ENCODE measurements at regions of chr2 and their contacts with region 1.

Region 1: DNA sequence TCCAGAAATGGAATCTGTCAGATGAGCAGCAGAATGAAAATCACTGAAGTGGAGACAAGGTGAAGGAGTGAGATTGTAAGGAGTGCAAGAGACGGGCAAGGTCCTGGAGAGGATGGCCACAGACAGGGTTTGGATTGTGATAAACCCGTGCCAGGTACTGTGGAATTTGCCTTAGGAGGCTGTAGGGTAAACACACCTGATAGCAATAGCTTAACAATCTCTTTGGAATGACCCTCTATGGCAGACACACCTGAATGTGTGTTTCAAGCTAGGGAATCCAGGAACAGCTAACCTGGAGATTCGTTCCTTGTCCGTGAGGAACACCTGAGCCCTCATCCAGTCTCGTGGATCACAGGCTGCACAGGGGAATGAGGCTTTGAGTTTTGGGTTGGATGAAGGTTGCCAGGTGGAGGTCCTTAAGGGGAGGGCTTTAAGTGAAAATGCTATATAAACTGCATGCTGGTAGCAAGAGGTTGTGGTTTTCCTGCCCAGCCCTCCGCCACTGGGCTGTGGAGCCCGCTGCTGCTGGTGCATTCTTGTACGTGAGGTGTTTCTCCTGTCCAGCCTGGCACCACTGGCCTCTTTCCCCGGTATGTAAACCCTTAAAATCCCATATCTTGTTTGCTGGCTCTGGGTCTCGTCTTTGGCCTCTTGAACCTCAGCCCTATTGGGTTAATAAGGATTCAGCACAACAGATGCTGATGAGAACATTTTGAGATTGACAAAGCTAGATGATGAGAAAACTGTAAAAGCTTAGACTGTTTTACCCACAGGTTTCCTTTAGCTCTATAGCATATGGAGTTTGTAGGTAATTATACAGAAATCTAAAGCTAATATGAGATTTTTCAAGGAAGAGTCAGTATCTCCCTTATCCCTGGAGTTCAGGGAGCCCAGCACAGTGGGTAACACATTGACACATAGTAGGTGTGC is 117.9 kb downstream of the ARHGAP15 start:
- DNase-seq: peak in 19 of 35 experiments; percentile 4 to 47 (median 22)
- ATAC-seq: peak; percentile 79 to 92 (median 84)
- H3K4me3 ChIP-seq: peak overlapping the region in 1 of 2 donors; percentile 41
- H3K4me3 Mint-ChIP-seq: no peak overlapping the region
- H3K27ac ChIP-seq: peak overlapping the region; percentile 47
- H3K27ac Mint-ChIP-seq: no peak overlapping the region
- H3K4me1 ChIP-seq: peaks cover 19 to 22% of the 10 kb centered on the region in 2 experiments
- H3K4me1 Mint-ChIP-seq: peaks cover 23 to 38% (median 34%) of the 10 kb centered on the region in 3 donors
- H3K27me3 ChIP-seq: no peaks in the 10 kb centered on the region
- H3K27me3 Mint-ChIP-seq: no peaks in the 10 kb centered on the region

Region 2: GRCh38 chr2:143223556-143223955 is 23.5 kb before region 1 on chr2:
- CTCF ChIA-PET with region 1: interaction called in 1 of 2 experiments, 10 read pairs
- POLR2A ChIA-PET with region 1: no interaction called
- DNase-seq: no peak
- ATAC-seq: no peak
- H3K4me3 ChIP-seq: no peak overlapping the region
- H3K4me3 Mint-ChIP-seq: no peak overlapping the region
- H3K27ac ChIP-seq: no peak overlapping the region
- H3K27ac Mint-ChIP-seq: peak overlapping the region; percentile 77 to 82
- H3K4me1 ChIP-seq: peaks cover 2 to 9% of the 10 kb centered on the region in 2 experiments
- H3K4me1 Mint-ChIP-seq: peaks cover 48 to 65% (median 63%) of the 10 kb centered on the region in 3 donors
- H3K27me3 ChIP-seq: no peaks in the 10 kb centered on the region
- H3K27me3 Mint-ChIP-seq: no peaks in the 10 kb centered on the region

Region 3: DNA sequence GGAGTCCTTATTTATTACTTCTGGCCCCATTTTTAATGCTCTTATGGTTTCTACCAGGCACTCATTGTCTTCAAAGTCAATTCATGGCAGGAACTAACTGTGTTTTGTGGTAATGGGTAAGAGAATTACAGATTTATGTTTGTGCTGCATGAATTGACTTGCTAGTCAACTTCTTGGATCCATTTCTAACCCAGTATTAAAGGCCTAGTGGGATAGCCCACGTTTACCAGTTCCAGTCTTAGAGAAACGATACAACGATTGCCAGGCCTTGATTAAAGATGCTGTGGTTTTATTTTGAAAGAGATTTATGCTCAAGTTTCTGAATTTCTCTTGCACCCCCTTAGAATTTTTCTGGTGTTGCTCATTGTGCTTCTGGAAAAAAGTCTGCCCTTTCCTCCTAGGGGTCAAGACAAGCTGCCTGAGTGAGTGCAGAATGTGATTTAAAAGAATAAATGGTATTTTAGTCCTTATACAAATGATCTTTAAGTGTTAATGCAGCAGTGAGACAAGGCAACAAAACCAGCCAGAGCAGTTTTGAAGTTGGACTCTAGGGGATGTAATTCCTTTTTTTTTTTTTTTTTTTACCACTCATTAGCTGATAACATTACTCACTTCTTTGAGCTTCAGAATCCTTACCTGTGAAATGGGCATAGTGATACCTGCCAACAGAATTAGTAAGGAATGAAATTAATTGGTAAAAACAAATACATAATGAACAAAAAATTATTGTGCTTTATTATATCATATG is 16.4 kb before region 1 on chr2:
- CTCF ChIA-PET with region 1: interaction called, 3 to 13 read pairs
- POLR2A ChIA-PET with region 1: interaction called in 1 of 2 experiments, 3 read pairs
- DNase-seq: no peak
- ATAC-seq: no peak
- H3K4me3 ChIP-seq: no peak overlapping the region
- H3K4me3 Mint-ChIP-seq: no peak overlapping the region
- H3K27ac ChIP-seq: no peak overlapping the region
- H3K27ac Mint-ChIP-seq: peak overlapping the region; percentile 30 to 48
- H3K4me1 ChIP-seq: no peaks in the 10 kb centered on the region
- H3K4me1 Mint-ChIP-seq: peaks cover 25 to 27% (median 27%) of the 10 kb centered on the region in 3 donors
- H3K27me3 ChIP-seq: no peaks in the 10 kb centered on the region
- H3K27me3 Mint-ChIP-seq: no peaks in the 10 kb centered on the region